ENCODE measurements at regions of chr20 and their contacts with region 1.

Region 1: GRCh38 chr20:22691369-22692118 is 107.2 kb upstream of the FOXA2 start:
- DNase-seq: peak; percentile 71 to 78
- H3K4me3 ChIP-seq: no peak overlapping the region
- H3K27ac ChIP-seq: no peak overlapping the region
- H3K4me1 ChIP-seq: peaks cover 0 to 4% of the 10 kb centered on the region in 2 donors
- H3K27me3 ChIP-seq: no peaks in the 10 kb centered on the region
- CTCF ChIP-seq: peak; percentile 85 to 93 (median 89)
- POLR2A ChIP-seq: no peak

Region 2: DNA sequence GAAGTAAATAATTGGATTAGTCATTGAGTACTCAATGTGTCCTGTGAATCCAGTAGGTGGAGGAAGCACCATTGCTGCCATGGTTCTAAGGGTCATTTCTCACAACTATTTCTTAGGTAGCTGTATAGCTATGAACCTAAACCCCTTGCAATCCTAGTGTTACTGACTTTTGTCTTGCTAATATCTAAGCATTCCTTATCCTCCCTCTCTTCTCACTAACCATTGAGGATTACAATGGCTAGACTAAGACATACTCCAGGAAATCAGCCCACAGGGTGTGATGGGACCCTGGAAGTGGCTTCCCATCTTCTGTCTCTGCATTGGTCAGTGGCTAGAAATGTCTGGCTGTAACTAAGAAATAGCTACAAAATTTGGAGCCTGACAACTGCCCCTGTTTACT is 79.9 kb before region 1 on chr20:
- intact Hi-C with region 1: no loop called
- DNase-seq: no peak
- H3K4me3 ChIP-seq: no peak overlapping the region
- H3K27ac ChIP-seq: no peak overlapping the region
- H3K4me1 ChIP-seq: peaks cover 18 to 21% of the 10 kb centered on the region in 2 donors
- H3K27me3 ChIP-seq: no peaks in the 10 kb centered on the region
- CTCF ChIP-seq: no peak
- POLR2A ChIP-seq: no peak

Region 3: DNA sequence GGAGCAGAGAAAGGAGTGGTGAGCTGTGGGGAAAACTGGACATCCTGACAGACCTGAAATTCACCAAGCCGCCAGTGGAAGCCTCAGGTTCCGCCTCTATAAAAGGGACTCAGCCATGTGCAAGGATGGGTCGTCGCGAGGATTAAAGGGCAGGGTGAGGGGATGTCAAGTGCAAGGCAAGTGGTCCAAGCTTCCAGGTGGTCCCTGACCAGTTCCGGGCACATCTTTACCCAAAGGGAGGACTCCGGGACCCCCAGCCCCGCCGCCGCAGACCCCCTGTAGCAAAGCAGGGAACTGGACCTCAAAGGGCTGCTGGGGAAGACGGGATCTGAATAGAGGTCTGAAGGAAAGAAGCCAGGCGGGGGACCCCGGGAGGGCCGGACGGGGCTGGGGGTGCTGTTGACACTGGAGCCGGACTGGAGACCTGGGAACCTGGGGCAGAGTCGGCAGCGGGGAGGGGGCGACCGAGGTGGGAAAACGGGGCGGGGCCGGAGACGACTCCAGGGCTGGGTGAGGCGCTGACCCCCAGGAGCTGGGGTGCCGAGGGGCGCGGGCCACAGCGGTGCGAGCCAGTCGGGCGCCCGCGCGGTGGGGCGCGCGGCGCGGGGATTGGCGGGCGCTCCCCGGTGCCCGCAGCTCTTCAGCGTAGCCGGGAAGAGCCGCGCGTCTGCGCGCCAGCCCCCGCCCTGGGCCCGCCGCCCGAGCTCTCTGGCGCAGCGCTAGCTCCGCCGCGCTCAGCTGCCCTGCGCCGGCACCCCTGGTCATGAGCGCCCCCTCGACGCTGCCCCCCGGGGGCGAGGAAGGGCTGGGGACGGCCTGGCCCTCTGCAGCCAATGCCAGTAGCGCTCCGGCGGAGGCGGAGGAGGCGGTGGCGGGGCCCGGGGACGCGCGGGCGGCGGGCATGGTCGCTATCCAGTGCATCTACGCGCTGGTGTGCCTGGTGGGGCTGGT is 343.5 kb after region 1 on chr20 and contains the start of gene SSTR4:
- intact Hi-C with region 1: loop called (anchors 10 kb)
- DNase-seq: no peak
- H3K4me3 ChIP-seq: no peak within 1 kb of the TSS
- H3K27ac ChIP-seq: no peak within 1 kb of the TSS
- H3K4me1 ChIP-seq: peaks cover 0 to 13% of the 10 kb centered on the region in 2 donors
- H3K27me3 ChIP-seq: no peaks in the 10 kb centered on the region
- CTCF ChIP-seq: no peak
- POLR2A ChIP-seq: no peak
- total RNA-seq, gene SSTR4: not detected

Region 4: GRCh38 chr20:23235173-23236027 is 543.9 kb after region 1 on chr20:
- intact Hi-C with region 1: loop called (anchors 10 kb)
- DNase-seq: peak; percentile 65 to 77
- H3K4me3 ChIP-seq: no peak overlapping the region
- H3K27ac ChIP-seq: no peak overlapping the region
- H3K4me1 ChIP-seq: no peaks in the 10 kb centered on the region
- H3K27me3 ChIP-seq: no peaks in the 10 kb centered on the region
- CTCF ChIP-seq: peak; percentile 75 to 88 (median 83)
- POLR2A ChIP-seq: no peak

Region 5: DNA sequence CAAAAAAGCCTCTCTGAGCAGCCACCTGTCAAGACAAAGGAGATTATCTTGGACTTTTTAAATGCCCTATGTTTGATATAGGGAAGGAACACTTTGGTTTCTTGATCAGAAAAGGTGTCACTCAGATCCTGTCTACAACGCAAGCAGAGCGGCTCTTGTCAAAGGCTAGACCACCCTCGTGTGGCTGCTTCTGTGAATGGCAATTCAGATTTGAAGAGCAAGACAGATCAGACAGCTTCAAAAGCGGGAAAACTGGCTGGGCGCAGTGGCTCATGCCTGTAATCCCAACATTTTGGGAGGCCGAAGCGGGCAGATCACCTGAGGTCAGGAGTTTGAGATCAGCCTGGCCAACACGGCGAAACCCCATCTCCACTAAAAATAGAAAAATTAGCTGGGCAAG is 649.0 kb after region 1 on chr20:
- intact Hi-C with region 1: loop called (anchors 5 kb)
- DNase-seq: peak; percentile 59
- H3K4me3 ChIP-seq: no peak overlapping the region
- H3K27ac ChIP-seq: no peak overlapping the region
- H3K4me1 ChIP-seq: no peaks in the 10 kb centered on the region
- H3K27me3 ChIP-seq: no peaks in the 10 kb centered on the region
- CTCF ChIP-seq: peak; percentile 12 to 56 (median 48)
- POLR2A ChIP-seq: no peak

Measured in thyroid gland (tissue), 4 donors.